CD4-positive, alpha-beta T cell (primary cell): ENCODE measurements at regions of chr2 and their contacts with region 1.

Region 1: DNA sequence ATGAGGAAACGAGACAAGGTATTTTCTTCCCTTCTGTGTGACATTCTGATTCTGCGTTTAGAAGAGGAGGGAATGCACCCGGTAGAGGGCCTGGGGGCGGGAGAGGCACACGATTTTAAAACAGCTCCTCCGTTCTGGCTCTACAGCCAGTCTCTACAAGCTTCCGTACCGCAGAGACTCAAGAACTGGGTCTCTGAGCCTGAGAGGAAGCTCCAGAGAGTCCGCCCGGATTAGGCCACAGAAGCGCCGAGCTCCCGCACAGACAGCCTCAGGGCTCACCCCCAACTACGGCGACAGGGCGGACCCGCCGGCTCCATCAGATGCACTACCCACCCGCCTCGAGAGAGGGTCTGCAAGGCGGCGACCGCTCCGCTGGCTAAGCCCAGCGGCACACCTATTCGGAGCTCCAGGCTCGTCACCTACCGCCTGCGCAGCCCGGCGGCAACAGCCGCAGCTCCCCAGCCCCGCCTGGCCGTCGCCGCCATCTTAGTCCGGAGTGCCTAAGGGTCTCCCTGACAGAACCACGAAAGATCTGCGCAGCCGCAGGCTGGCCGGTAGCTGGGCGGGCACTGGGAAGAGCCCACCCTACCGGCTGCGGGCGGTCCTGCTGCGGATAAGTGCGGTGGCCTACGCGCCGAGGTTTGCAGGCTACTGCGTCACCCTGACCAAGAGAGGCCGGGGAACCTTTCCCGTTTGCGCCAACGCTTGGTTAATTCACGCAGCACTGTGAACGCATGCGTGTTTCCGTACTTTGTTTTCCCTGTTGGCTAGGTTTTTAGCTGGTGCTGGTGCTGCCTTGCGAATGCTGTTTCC is at the start of gene NFU1:
- DNase-seq: peak; percentile 70 to 95 (median 82)
- ATAC-seq: peak; percentile 77
- H3K4me3 ChIP-seq: peak within 1 kb of the TSS; percentile 81
- H3K4me3 Mint-ChIP-seq: peak within 1 kb of the TSS; percentile 94
- H3K27ac ChIP-seq: peak within 1 kb of the TSS; percentile 87 to 94
- H3K27ac Mint-ChIP-seq: peak within 1 kb of the TSS; percentile 99
- H3K4me1 ChIP-seq: peaks cover 19% of the 10 kb centered on the region
- H3K4me1 Mint-ChIP-seq: peaks cover 44% of the 10 kb centered on the region
- H3K27me3 ChIP-seq: no peaks in the 10 kb centered on the region
- H3K27me3 Mint-ChIP-seq: no peaks in the 10 kb centered on the region
- CTCF ChIP-seq: peak; percentile 25
- total RNA-seq, gene NFU1: 18.5 to 22.2 TPM

Region 2: GRCh38 chr2:69386789-69387734 is 50.1 kb before region 1 on chr2 and contains the start of gene GFPT1:
- CTCF ChIA-PET with region 1: interaction called, 3 read pairs
- POLR2A ChIA-PET with region 1: interaction called, 21 read pairs
- intact Hi-C with region 1: loop called in 1 of 2 experiments (anchors 1 kb)
- DNase-seq: peak; percentile 84 to 97 (median 92)
- ATAC-seq: peak; percentile 97
- H3K4me3 ChIP-seq: peak within 1 kb of the TSS; percentile 62
- H3K4me3 Mint-ChIP-seq: peak within 1 kb of the TSS; percentile 89
- H3K27ac ChIP-seq: peak within 1 kb of the TSS; percentile 39 to 58
- H3K27ac Mint-ChIP-seq: peak within 1 kb of the TSS; percentile 79
- H3K4me1 ChIP-seq: peaks cover 22% of the 10 kb centered on the region
- H3K4me1 Mint-ChIP-seq: peaks cover 48% of the 10 kb centered on the region
- H3K27me3 ChIP-seq: no peaks in the 10 kb centered on the region
- H3K27me3 Mint-ChIP-seq: no peaks in the 10 kb centered on the region
- CTCF ChIP-seq: no peak
- total RNA-seq, gene GFPT1: 17.6 to 18.3 TPM

Region 3: GRCh38 chr2:69499966-69500365 is 62.8 kb after region 1 on chr2:
- CTCF ChIA-PET with region 1: no interaction called
- POLR2A ChIA-PET with region 1: interaction called, 3 read pairs
- intact Hi-C with region 1: loop called in 1 of 2 experiments (anchors 1 kb)
- DNase-seq: peak in 7 of 14 experiments; percentile 6 to 37 (median 12)
- ATAC-seq: peak; percentile 94
- H3K4me3 ChIP-seq: no peak overlapping the region
- H3K4me3 Mint-ChIP-seq: peak overlapping the region; percentile 31
- H3K27ac ChIP-seq: peak overlapping the region in 1 of 2 donors; percentile 36
- H3K27ac Mint-ChIP-seq: peak overlapping the region; percentile 87
- H3K4me1 ChIP-seq: peaks cover 3% of the 10 kb centered on the region
- H3K4me1 Mint-ChIP-seq: peaks cover 29% of the 10 kb centered on the region
- H3K27me3 ChIP-seq: no peaks in the 10 kb centered on the region
- H3K27me3 Mint-ChIP-seq: no peaks in the 10 kb centered on the region
- CTCF ChIP-seq: no peak

Region 4: GRCh38 chr2:69518841-69519240 is 81.7 kb after region 1 on chr2:
- CTCF ChIA-PET with region 1: no interaction called
- POLR2A ChIA-PET with region 1: no interaction called
- intact Hi-C with region 1: no loop called
- DNase-seq: no peak
- ATAC-seq: no peak
- H3K4me3 ChIP-seq: no peak overlapping the region
- H3K4me3 Mint-ChIP-seq: no peak overlapping the region
- H3K27ac ChIP-seq: no peak overlapping the region
- H3K27ac Mint-ChIP-seq: peak overlapping the region; percentile 58
- H3K4me1 ChIP-seq: no peaks in the 10 kb centered on the region
- H3K4me1 Mint-ChIP-seq: no peaks in the 10 kb centered on the region
- H3K27me3 ChIP-seq: no peaks in the 10 kb centered on the region
- H3K27me3 Mint-ChIP-seq: no peaks in the 10 kb centered on the region
- CTCF ChIP-seq: no peak

Region 5: GRCh38 chr2:69608109-69608508 is 171.0 kb after region 1 on chr2:
- CTCF ChIA-PET with region 1: no interaction called
- POLR2A ChIA-PET with region 1: interaction called, 4 read pairs
- intact Hi-C with region 1: loop called in 1 of 2 experiments (anchors 5 kb)
- DNase-seq: no peak
- ATAC-seq: no peak
- H3K4me3 ChIP-seq: no peak overlapping the region
- H3K4me3 Mint-ChIP-seq: no peak overlapping the region
- H3K27ac ChIP-seq: peak overlapping the region in 1 of 2 donors; percentile 29
- H3K27ac Mint-ChIP-seq: peak overlapping the region; percentile 89
- H3K4me1 ChIP-seq: peaks cover 49% of the 10 kb centered on the region
- H3K4me1 Mint-ChIP-seq: peaks cover 90% of the 10 kb centered on the region
- H3K27me3 ChIP-seq: no peaks in the 10 kb centered on the region
- H3K27me3 Mint-ChIP-seq: no peaks in the 10 kb centered on the region
- CTCF ChIP-seq: no peak

Region 6: GRCh38 chr2:70190418-70191243 is 753.5 kb after region 1 on chr2 and contains the start of gene C2orf42:
- CTCF ChIA-PET with region 1: no interaction called
- POLR2A ChIA-PET with region 1: interaction called, 12 read pairs
- intact Hi-C with region 1: no loop called
- DNase-seq: peak; percentile 89 to 98 (median 92)
- ATAC-seq: peak; percentile 81
- H3K4me3 ChIP-seq: peak within 1 kb of the TSS; percentile 88
- H3K4me3 Mint-ChIP-seq: peak within 1 kb of the TSS; percentile 91
- H3K27ac ChIP-seq: peak within 1 kb of the TSS; percentile 95 to 98
- H3K27ac Mint-ChIP-seq: peak within 1 kb of the TSS; percentile 95
- H3K4me1 ChIP-seq: peaks cover 7% of the 10 kb centered on the region
- H3K4me1 Mint-ChIP-seq: peaks cover 12% of the 10 kb centered on the region
- H3K27me3 ChIP-seq: no peaks in the 10 kb centered on the region
- H3K27me3 Mint-ChIP-seq: no peaks in the 10 kb centered on the region
- CTCF ChIP-seq: peak; percentile 21
- total RNA-seq, gene C2orf42: 16.9 to 18.4 TPM